BJ (cell line): ENCODE measurements at regions of chrX and their contacts with region 1.

Region 1: GRCh38 chrX:133660281-133660680 is 245.0 kb upstream of the GPC4 start:
- DNase-seq: no peak
- H3K4me3 ChIP-seq: no peak overlapping the region
- H3K27me3 ChIP-seq: no peaks in the 10 kb centered on the region
- CTCF ChIP-seq: no peak

Region 2: GRCh38 chrX:133530960-133531359 is 129.3 kb before region 1 on chrX:
- CTCF ChIA-PET with region 1: no interaction called
- POLR2A ChIA-PET with region 1: no interaction called
- DNase-seq: no peak
- H3K4me3 ChIP-seq: no peak overlapping the region
- H3K27me3 ChIP-seq: no peaks in the 10 kb centered on the region
- CTCF ChIP-seq: no peak

Region 3: GRCh38 chrX:133745349-133745748 is 85.1 kb after region 1 on chrX:
- CTCF ChIA-PET with region 1: no interaction called
- POLR2A ChIA-PET with region 1: interaction called, 10 read pairs
- DNase-seq: no peak
- H3K4me3 ChIP-seq: no peak overlapping the region
- H3K27me3 ChIP-seq: no peaks in the 10 kb centered on the region
- CTCF ChIP-seq: no peak